ENCODE measurements at regions of chr11 and their contacts with region 1.

Region 1: GRCh38 chr11:125364121-125364826 is 131.8 kb downstream of the FEZ1 start:
- DNase-seq: no peak
- H3K4me3 ChIP-seq: no peak overlapping the region
- H3K27ac ChIP-seq: peak overlapping the region; percentile 22
- H3K27me3 ChIP-seq: no peaks in the 10 kb centered on the region
- CTCF ChIP-seq: peak; percentile 51

Region 2: DNA sequence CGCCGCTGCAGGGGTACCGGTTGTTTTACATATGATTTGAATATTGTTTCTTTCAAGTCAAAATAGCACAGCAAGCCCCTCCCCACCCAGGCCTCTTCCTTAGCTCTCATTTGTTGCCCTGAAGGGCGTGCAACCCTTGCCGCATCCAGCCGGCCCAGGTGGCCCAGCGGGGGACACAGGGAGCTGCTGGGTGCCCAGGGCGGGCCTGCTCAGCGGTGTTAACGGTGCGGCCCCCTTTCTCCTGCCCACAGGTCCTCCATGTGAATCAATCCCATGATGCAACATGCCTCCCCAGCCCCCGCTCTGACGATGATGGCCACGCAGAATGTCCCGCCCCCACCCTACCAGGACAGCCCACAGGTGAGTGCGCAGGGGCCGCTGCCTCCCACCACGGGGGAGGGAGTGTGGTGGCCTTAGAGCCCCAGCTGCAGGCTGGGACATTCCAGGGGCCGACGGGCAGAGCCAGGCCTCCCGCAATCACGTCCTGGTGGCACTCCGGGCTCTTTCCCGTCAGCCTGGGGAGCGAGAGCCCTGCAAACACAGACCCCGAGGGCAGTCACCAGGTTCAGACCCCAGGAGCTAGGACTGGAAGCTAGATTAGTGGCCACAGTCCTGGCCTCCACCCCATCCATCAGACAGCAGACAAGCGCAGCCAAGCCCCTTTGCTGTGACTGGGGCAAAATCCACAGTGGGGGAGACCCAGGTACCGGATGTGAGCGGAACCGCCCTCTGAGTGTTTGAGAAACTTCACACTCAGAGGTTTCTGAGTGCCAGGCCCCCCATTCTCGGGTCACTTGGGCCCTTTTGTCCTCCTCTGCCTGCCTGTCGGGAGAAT is 13.0 kb before region 1 on chr11:
- CTCF ChIA-PET with region 1: interaction called, 68 read pairs
- POLR2A ChIA-PET with region 1: no interaction called
- DNase-seq: no peak
- H3K4me3 ChIP-seq: no peak overlapping the region
- H3K27ac ChIP-seq: no peak overlapping the region
- H3K27me3 ChIP-seq: no peaks in the 10 kb centered on the region
- CTCF ChIP-seq: no peak

Region 3: DNA sequence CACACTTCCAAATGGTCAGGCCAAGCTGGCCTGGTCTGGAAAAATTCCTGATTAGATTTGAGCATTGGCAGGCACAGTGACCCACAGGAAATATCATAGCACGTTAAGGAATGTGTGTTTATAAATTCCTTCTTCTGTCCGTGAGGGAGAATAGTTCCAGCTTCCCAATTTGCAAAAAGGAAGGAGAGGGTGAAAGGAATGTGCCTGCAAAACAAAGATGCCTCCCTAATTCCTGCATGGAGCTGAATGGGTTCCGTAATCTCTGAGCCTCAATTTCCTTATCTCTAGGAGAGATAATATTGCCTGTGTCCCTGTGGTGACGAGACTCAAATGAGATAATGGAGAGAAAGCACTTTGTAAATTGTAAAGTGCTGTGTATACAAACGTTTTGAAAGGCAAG is 26.7 kb after region 1 on chr11:
- CTCF ChIA-PET with region 1: interaction called, 4 read pairs
- POLR2A ChIA-PET with region 1: interaction called, 10 read pairs
- DNase-seq: peak; percentile 43
- H3K4me3 ChIP-seq: no peak overlapping the region
- H3K27ac ChIP-seq: no peak overlapping the region
- H3K27me3 ChIP-seq: no peaks in the 10 kb centered on the region
- CTCF ChIP-seq: no peak

Region 4: GRCh38 chr11:125410619-125411018 is 46.3 kb after region 1 on chr11:
- CTCF ChIA-PET with region 1: no interaction called
- POLR2A ChIA-PET with region 1: no interaction called
- DNase-seq: no peak
- H3K4me3 ChIP-seq: no peak overlapping the region
- H3K27ac ChIP-seq: no peak overlapping the region
- H3K27me3 ChIP-seq: peaks cover 25% of the 10 kb centered on the region
- CTCF ChIP-seq: no peak